ENCODE measurements at regions of chr2 and their contacts with region 1.

Region 1: GRCh38 chr2:37168217-37168981 is 11.6 kb upstream of the EIF2AK2 start:
- DNase-seq: peak; percentile 45
- ATAC-seq: peak; percentile 87
- H3K4me3 Mint-ChIP-seq: no peak overlapping the region
- H3K27ac Mint-ChIP-seq: no peak overlapping the region
- H3K4me1 Mint-ChIP-seq: no peaks in the 10 kb centered on the region
- H3K27me3 Mint-ChIP-seq: no peaks in the 10 kb centered on the region

Region 2: DNA sequence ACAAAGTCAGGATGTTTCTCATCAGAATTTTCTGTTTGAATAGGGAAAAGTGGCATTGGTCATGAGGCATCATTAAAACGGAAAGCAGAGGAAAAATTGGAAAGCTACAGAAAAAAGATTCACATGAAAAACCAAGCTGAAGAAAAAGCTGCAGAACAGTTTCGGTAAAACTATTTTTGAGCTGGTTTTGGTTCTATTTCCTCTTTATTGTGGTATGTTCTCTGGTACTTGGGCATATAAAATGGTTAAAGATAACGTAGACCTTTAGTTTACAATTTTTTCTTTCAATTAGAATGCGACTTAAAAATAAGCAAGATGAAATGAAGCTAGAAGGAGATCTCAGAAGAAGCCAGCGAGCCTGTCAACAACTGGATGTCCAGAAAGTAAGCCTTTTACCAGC is 76.5 kb before region 1 on chr2:
- CTCF ChIA-PET with region 1: no interaction called
- POLR2A ChIA-PET with region 1: no interaction called
- intact Hi-C with region 1: no loop called
- DNase-seq: no peak
- ATAC-seq: no peak
- H3K4me3 Mint-ChIP-seq: no peak overlapping the region
- H3K27ac Mint-ChIP-seq: no peak overlapping the region
- H3K4me1 Mint-ChIP-seq: no peaks in the 10 kb centered on the region
- H3K27me3 Mint-ChIP-seq: no peaks in the 10 kb centered on the region

Region 3: GRCh38 chr2:37156857-37157714 is 11.3 kb before region 1 on chr2 and contains the start of gene EIF2AK2:
- CTCF ChIA-PET with region 1: interaction called, 17 read pairs
- POLR2A ChIA-PET with region 1: no interaction called
- intact Hi-C with region 1: no loop called
- DNase-seq: peak; percentile 89
- ATAC-seq: peak; percentile 93
- H3K4me3 Mint-ChIP-seq: peak within 1 kb of the TSS; percentile 85
- H3K27ac Mint-ChIP-seq: peak within 1 kb of the TSS; percentile 89
- H3K4me1 Mint-ChIP-seq: peaks cover 40% of the 10 kb centered on the region
- H3K27me3 Mint-ChIP-seq: no peaks in the 10 kb centered on the region
- total RNA-seq, gene EIF2AK2: 66.4 to 70.6 TPM

Region 4: GRCh38 chr2:37180006-37180639 is 11.7 kb after region 1 on chr2:
- CTCF ChIA-PET with region 1: interaction called, 18 read pairs
- POLR2A ChIA-PET with region 1: interaction called, 3 read pairs
- intact Hi-C with region 1: no loop called
- DNase-seq: no peak
- ATAC-seq: no peak
- H3K4me3 Mint-ChIP-seq: no peak overlapping the region
- H3K27ac Mint-ChIP-seq: no peak overlapping the region
- H3K4me1 Mint-ChIP-seq: no peaks in the 10 kb centered on the region
- H3K27me3 Mint-ChIP-seq: peaks cover 15% of the 10 kb centered on the region

Region 5: DNA sequence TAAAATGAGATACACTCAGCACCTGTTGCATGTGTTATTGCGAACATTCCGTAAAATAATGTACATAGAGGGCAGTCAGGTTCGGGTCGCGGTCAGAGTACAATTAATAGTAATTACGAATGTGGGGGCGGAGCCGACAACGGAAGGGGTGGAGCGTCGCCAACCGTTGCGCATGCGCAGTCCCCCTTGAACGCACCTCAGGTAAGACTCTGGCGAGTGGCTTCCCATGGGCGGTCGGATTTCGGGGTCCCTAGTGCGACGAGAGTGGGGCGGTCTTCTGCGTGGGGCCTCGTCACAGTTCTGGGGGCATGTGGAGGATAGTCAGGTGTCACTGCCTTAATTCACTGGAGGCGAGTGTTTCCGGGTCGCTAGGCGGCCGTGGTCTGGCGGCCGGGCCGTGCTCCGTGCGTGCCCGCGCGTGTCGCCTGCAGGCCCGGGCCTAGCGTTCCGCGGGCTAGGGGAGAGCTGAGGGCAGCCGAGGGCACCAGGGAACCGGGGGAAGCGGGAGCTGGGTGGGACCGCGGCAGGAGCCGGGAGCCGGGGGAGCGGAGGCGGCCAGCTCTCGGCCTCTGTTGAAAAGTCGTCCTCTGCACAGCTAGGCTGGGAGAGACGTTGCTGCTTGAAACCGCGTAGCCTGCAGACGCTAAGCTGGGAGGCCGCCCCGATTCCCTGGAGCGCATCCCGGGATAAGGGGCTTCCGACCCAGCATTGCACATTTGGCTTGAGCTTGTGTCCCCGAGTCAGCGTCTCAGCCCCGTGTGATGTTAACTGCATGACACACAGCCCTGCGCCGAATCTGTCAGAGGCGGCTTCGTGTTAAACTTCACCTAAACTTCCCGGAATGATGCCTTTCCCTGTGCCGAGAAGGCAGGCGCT is 28.2 kb after region 1 on chr2 and contains the start of gene CEBPZOS:
- CTCF ChIA-PET with region 1: interaction called, 5 read pairs
- POLR2A ChIA-PET with region 1: no interaction called
- intact Hi-C with region 1: loop called in 1 of 2 experiments (anchors 1 kb)
- DNase-seq: peak; percentile 93
- ATAC-seq: peak; percentile 84
- H3K4me3 Mint-ChIP-seq: peak within 1 kb of the TSS; percentile 86
- H3K27ac Mint-ChIP-seq: peak within 1 kb of the TSS; percentile 95
- H3K4me1 Mint-ChIP-seq: peaks cover 33% of the 10 kb centered on the region
- H3K27me3 Mint-ChIP-seq: no peaks in the 10 kb centered on the region
- total RNA-seq, gene CEBPZOS: 46.6 to 49.8 TPM

Region 6: GRCh38 chr2:37287966-37288365 is 119.6 kb after region 1 on chr2:
- CTCF ChIA-PET with region 1: no interaction called
- POLR2A ChIA-PET with region 1: no interaction called
- intact Hi-C with region 1: loop called in 1 of 2 experiments (anchors 2 kb)
- DNase-seq: peak; percentile 43
- ATAC-seq: peak; percentile 68
- H3K4me3 Mint-ChIP-seq: no peak overlapping the region
- H3K27ac Mint-ChIP-seq: no peak overlapping the region
- H3K4me1 Mint-ChIP-seq: no peaks in the 10 kb centered on the region
- H3K27me3 Mint-ChIP-seq: no peaks in the 10 kb centered on the region

Region 7: GRCh38 chr2:37623971-37624900 is 455.8 kb after region 1 on chr2:
- CTCF ChIA-PET with region 1: no interaction called
- POLR2A ChIA-PET with region 1: no interaction called
- intact Hi-C with region 1: no loop called
- DNase-seq: peak; percentile 45
- ATAC-seq: peak; percentile 78
- H3K4me3 Mint-ChIP-seq: peak overlapping the region; percentile 48
- H3K27ac Mint-ChIP-seq: peak overlapping the region; percentile 85
- H3K4me1 Mint-ChIP-seq: peaks cover 76% of the 10 kb centered on the region
- H3K27me3 Mint-ChIP-seq: no peaks in the 10 kb centered on the region

Region 8: DNA sequence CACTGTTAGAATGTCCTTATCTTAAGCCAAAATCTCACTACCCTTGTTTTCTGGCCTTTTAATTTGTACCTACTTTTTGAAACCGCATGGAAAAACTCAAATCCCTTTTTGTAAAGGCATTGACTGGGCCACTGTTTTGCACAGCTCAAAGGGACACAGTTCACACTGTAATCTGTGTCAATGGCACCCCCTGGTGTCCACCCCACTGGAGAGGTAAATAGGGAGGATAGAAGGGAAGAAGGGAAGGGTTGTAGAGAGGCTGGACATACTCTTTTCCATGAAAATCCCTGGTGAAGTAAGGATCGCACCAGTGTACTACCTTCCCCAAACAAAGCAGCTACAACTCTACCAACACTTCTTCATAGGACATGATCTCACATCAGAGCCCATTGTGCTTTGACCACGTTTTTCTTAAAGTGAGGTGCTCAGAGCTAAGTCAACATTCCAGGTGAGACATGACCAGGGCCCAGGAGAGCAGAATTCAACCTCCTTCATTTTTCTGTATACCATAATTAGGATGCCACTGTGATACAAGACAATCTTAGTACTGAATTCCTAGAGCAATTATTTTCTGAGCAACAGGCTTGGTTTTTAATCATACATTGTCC is 664.3 kb after region 1 on chr2:
- CTCF ChIA-PET with region 1: no interaction called
- POLR2A ChIA-PET with region 1: no interaction called
- intact Hi-C with region 1: loop called (anchors 2 to 5 kb)
- DNase-seq: peak; percentile 90
- ATAC-seq: peak; percentile 76
- H3K4me3 Mint-ChIP-seq: no peak overlapping the region
- H3K27ac Mint-ChIP-seq: peak overlapping the region; percentile 32
- H3K4me1 Mint-ChIP-seq: peaks cover 22% of the 10 kb centered on the region
- H3K27me3 Mint-ChIP-seq: no peaks in the 10 kb centered on the region

Region 9: GRCh38 chr2:37890893-37891495 is 722.6 kb after region 1 on chr2:
- CTCF ChIA-PET with region 1: no interaction called
- POLR2A ChIA-PET with region 1: no interaction called
- intact Hi-C with region 1: loop called in 1 of 2 experiments (anchors 5 kb)
- DNase-seq: peak; percentile 83
- ATAC-seq: peak; percentile 43
- H3K4me3 Mint-ChIP-seq: no peak overlapping the region
- H3K27ac Mint-ChIP-seq: no peak overlapping the region
- H3K4me1 Mint-ChIP-seq: peaks cover 46% of the 10 kb centered on the region
- H3K27me3 Mint-ChIP-seq: peaks cover 8% of the 10 kb centered on the region